ENCODE measurements at regions of chr17 and their contacts with region 1.

Region 1: GRCh38 chr17:17496189-17497064 is at the start of gene RASD1:
- DNase-seq: peak; percentile 59
- ATAC-seq: peak; percentile 86
- H3K4me3 ChIP-seq: peak within 1 kb of the TSS; percentile 53 to 71 (median 65); a peak in 5 of 6 replicates
- H3K27ac ChIP-seq: peak within 1 kb of the TSS; percentile 34
- H3K4me1 ChIP-seq: peaks cover 26% of the 10 kb centered on the region
- H3K27me3 ChIP-seq: peaks cover 4 to 39% of the 10 kb centered on the region in 2 experiments; a peak in 4 of 5 replicates
- CTCF ChIP-seq: peak; percentile 81
- EP300 ChIP-seq: 0 out of 4 replicates have a peak, but pooled peaks of 1 of the 2 experiments have one; percentile 13
- POLR2A ChIP-seq: peak; percentile 89 to 97
- RAD21 ChIP-seq: peak; percentile 96
- total RNA-seq, gene RASD1: 1.4 and 1.6 TPM in 2 replicates

Region 2: GRCh38 chr17:17370711-17371110 is 125.7 kb before region 1 on chr17:
- CTCF ChIA-PET with region 1: no interaction called
- POLR2A ChIA-PET with region 1: interaction called, 12 read pairs
- in situ Hi-C with region 1: no loop called
- intact Hi-C with region 1: no loop called
- DNase-seq: no peak
- ATAC-seq: peak; percentile 25; the same call in 2 of the 3 replicates
- H3K4me3 ChIP-seq: no peak overlapping the region
- H3K27ac ChIP-seq: no peak overlapping the region
- H3K4me1 ChIP-seq: peaks cover 48% of the 10 kb centered on the region
- H3K27me3 ChIP-seq: no peaks in the 10 kb centered on the region
- CTCF ChIP-seq: no peak
- EP300 ChIP-seq: no peak
- POLR2A ChIP-seq: no peak
- RAD21 ChIP-seq: no peak

Region 3: GRCh38 chr17:17440010-17440843 is 56.2 kb before region 1 on chr17:
- CTCF ChIA-PET with region 1: no interaction called
- POLR2A ChIA-PET with region 1: interaction called, 57 read pairs
- in situ Hi-C with region 1: no loop called
- intact Hi-C with region 1: loop called (anchors 5 kb)
- DNase-seq: peak; percentile 77
- ATAC-seq: peak; percentile 67
- H3K4me3 ChIP-seq: peak overlapping the region in 1 of 3 experiments; percentile 32; a peak in 1 of 6 replicates
- H3K27ac ChIP-seq: peak overlapping the region; percentile 42
- H3K4me1 ChIP-seq: peaks cover 60% of the 10 kb centered on the region
- H3K27me3 ChIP-seq: no peaks in the 10 kb centered on the region
- CTCF ChIP-seq: peak; percentile 81
- EP300 ChIP-seq: 0 out of 4 replicates have a peak, but pooled peaks of 1 of the 2 experiments have one; percentile 23
- POLR2A ChIP-seq: no peak
- RAD21 ChIP-seq: peak; percentile 67

Region 4: GRCh38 chr17:17528696-17529652 is 32.5 kb after region 1 on chr17:
- CTCF ChIA-PET with region 1: no interaction called
- POLR2A ChIA-PET with region 1: interaction called, 12 read pairs
- in situ Hi-C with region 1: no loop called
- intact Hi-C with region 1: no loop called
- DNase-seq: peak; percentile 53
- ATAC-seq: peak; percentile 83
- H3K4me3 ChIP-seq: no peak overlapping the region
- H3K27ac ChIP-seq: no peak overlapping the region
- H3K4me1 ChIP-seq: peaks cover 30% of the 10 kb centered on the region
- H3K27me3 ChIP-seq: no peaks in the 10 kb centered on the region
- CTCF ChIP-seq: no peak
- EP300 ChIP-seq: no peak
- POLR2A ChIP-seq: no peak
- RAD21 ChIP-seq: no peak

Region 5: GRCh38 chr17:17568749-17569195 is 72.3 kb after region 1 on chr17:
- CTCF ChIA-PET with region 1: interaction called, 55 read pairs
- POLR2A ChIA-PET with region 1: interaction called, 114 read pairs
- in situ Hi-C with region 1: no loop called
- intact Hi-C with region 1: loop called (anchors 1 kb)
- DNase-seq: peak; percentile 54
- ATAC-seq: peak; percentile 38
- H3K4me3 ChIP-seq: no peak overlapping the region
- H3K27ac ChIP-seq: no peak overlapping the region
- H3K4me1 ChIP-seq: peaks cover 48% of the 10 kb centered on the region
- H3K27me3 ChIP-seq: no peaks in the 10 kb centered on the region
- CTCF ChIP-seq: peak; percentile 97
- EP300 ChIP-seq: no peak
- POLR2A ChIP-seq: no peak
- RAD21 ChIP-seq: peak; percentile 95

Region 6: GRCh38 chr17:17613708-17614114 is 117.3 kb after region 1 on chr17:
- CTCF ChIA-PET with region 1: interaction called, 4 read pairs
- POLR2A ChIA-PET with region 1: interaction called, 14 read pairs
- in situ Hi-C with region 1: no loop called
- intact Hi-C with region 1: loop called (anchors 2 kb)
- DNase-seq: peak; percentile 63
- ATAC-seq: peak; percentile 93
- H3K4me3 ChIP-seq: no peak overlapping the region
- H3K27ac ChIP-seq: no peak overlapping the region
- H3K4me1 ChIP-seq: peaks cover 18% of the 10 kb centered on the region
- H3K27me3 ChIP-seq: no peaks in the 10 kb centered on the region
- CTCF ChIP-seq: peak; percentile 79
- EP300 ChIP-seq: no peak
- POLR2A ChIP-seq: no peak
- RAD21 ChIP-seq: peak; percentile 51

Measured in HepG2 (cell line).